ENCODE measurements at regions of chr14 and their contacts with region 1.

Region 1: DNA sequence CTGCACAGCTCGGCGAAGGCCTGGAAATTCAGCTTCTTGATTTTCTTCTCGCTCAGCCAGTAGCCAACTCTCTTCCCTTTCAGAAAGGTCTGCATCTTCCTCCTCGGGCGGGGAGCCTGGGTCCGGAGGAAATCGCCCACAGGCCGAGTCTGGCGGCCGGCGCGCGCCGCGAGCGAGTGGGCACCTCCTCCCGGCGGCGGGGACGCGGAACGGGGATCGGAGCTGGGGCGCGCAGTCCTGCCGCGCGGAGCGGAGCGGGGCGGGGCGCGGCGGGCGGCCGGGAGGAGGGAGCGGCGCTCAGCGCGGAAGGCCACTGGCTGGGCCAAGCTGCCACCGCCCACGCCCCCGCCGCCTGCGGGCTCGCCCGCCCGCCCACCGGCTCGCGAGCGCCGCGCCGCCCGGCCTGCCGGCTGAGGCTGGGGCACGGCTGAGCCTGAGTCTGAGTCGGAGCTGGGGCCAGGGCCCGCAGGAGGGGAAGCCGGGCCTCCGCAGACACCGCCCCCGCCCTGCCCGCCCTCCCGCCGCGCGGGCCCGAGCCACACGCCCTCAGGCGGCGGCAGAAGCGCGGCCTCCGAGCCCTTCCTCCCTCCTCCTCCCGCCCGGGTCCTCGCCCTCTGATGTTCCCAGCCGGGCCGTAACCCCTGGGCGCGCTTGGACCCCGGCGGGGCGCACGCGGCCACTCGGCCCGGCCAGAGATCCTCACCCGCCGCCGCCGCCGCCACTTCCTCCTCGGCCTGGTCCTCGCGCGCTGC is 480 bp downstream of the ITPK1 start:
- DNase-seq: peak; percentile 93
- H3K4me3 ChIP-seq: peak overlapping the region; percentile 90 to 93 (median 92)
- H3K27ac ChIP-seq: peak overlapping the region; percentile 96 to 100 (median 99)
- H3K4me1 ChIP-seq: peaks cover 4 to 35% (median 28%) of the 10 kb centered on the region in 4 donors
- H3K27me3 ChIP-seq: no peaks in the 10 kb centered on the region
- CTCF ChIP-seq: no peak
- EP300 ChIP-seq: no peak
- POLR2A ChIP-seq: peak; percentile 78

Region 2: DNA sequence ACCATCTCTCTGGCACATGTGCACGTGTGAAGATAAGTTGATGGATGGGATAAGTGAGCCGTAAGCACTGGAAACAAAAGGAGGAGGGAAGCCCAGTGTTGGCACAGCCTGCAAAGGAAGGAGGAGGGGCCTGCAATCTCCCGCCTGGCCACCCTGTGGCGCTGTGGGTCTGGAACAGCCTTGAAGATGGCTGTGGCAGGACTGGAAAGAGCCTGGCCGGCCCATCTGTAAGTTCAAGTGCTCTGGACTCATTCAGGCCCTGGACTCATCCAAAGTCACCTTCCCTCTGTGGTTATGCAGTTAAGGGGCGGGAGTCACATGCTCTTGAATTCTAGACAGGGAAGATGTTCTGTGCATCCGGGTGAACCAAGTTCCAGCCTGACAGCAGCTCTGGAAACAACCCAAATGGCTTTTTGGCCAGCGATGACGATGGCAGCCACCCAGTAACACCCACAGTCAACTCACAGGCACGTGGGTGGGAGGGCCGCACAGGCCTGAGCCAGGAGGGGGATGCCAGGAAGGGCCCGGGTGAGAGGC is 141.9 kb before region 1 on chr14:
- in situ Hi-C with region 1: no loop called
- intact Hi-C with region 1: loop called (anchors 5 kb)
- DNase-seq: peak; percentile 81
- H3K4me3 ChIP-seq: no peak overlapping the region
- H3K27ac ChIP-seq: peak overlapping the region in 3 of 4 donors; percentile 73 to 89 (median 76)
- H3K4me1 ChIP-seq: peaks cover 0 to 12% (median 8%) of the 10 kb centered on the region in 4 donors
- H3K27me3 ChIP-seq: no peaks in the 10 kb centered on the region
- CTCF ChIP-seq: peak; percentile 61 to 84 (median 76)
- EP300 ChIP-seq: peak; percentile 26
- POLR2A ChIP-seq: no peak

Region 3: DNA sequence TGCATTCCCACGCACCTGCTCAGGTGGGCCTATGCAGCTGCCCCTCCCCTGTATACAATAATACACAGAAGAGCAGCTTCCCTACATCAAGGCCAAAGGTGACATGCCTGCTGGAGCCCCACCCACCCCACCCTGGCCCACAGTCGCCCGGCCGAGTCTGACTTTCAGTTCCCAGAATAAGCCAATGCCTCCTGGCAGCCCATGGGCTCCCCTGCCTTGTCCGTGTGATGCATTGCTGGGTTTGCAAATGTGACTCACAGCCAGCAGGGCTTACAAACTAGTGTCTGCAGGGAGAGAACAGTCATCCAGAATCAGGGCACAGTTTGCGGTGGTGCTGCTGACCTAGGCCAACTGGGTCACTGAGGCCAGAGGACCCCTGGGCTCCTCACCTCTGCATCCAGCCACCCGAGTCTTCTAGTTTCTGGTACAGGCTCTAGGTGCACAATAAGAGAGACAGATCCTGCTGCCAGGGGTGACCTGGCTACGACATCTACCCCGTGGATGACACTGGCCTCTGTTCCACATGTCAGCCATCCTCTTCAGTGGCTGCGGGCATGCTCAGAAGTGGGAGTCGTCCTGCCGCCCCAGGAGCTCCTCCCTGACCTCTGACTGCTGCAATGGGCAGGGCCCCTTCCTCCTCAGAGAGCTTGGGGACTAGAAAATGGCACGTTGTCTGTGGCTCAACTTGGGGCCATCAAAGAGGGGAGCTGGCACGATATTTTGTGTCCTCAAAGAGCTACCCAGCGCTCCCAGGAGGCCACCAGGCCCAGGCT is 107.8 kb before region 1 on chr14:
- in situ Hi-C with region 1: no loop called
- intact Hi-C with region 1: no loop called
- DNase-seq: peak; percentile 62
- H3K4me3 ChIP-seq: no peak overlapping the region
- H3K27ac ChIP-seq: peak overlapping the region; percentile 54 to 77 (median 68)
- H3K4me1 ChIP-seq: peaks cover 33 to 53% (median 45%) of the 10 kb centered on the region in 4 donors
- H3K27me3 ChIP-seq: no peaks in the 10 kb centered on the region
- CTCF ChIP-seq: no peak
- EP300 ChIP-seq: no peak
- POLR2A ChIP-seq: no peak

Region 4: DNA sequence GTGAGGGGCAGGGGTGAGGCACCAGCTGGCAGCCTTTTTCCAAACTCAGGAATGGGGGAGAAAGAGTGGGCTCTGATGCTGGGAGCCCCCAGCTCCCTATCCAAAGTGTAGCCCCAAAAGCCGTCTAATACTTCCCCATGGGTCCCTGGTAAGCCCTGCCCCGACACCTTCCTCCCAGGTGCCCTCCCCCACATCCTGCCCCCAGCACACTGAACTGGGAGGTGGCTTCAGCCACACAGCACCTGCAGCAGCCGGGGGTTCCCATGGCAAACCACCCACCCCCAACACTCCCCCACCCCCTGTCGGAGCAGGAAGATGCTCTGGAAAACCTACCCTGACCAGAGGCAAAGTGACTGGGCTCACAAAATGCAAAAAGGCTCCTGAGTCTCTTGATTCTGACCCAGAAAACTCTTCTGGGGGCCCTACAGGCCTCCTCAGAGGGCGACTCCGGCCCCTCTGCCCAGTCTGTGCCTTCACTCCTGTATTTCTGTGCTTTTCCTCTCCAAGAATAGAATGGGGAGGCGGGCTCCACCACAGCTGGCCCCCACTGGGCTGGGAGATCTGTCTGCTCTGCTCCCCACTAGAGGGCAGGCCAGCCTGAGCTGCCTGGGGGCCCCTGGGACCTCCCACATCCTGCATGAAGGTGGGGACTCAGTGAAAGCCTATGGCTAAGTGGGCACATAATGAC is 81.1 kb before region 1 on chr14:
- in situ Hi-C with region 1: no loop called
- intact Hi-C with region 1: loop called (anchors 10 kb)
- DNase-seq: no peak
- H3K4me3 ChIP-seq: no peak overlapping the region
- H3K27ac ChIP-seq: peak overlapping the region; percentile 46 to 89 (median 60)
- H3K4me1 ChIP-seq: peaks cover 26 to 73% (median 42%) of the 10 kb centered on the region in 4 donors
- H3K27me3 ChIP-seq: no peaks in the 10 kb centered on the region
- CTCF ChIP-seq: peak; percentile 35 to 54 (median 43)
- EP300 ChIP-seq: no peak
- POLR2A ChIP-seq: no peak

Measured in transverse colon (tissue), 4 donors.